Upper lobe of right lung (tissue), 1 donor: ENCODE measurements at regions of chr1 and their contacts with region 1.

Region 1: GRCh38 chr1:100606438-100606837 is 68.5 kb downstream of the GPR88 start:
- DNase-seq: no peak
- ATAC-seq: peak; percentile 81
- H3K4me3 ChIP-seq: no peak overlapping the region
- H3K27ac ChIP-seq: no peak overlapping the region
- H3K4me1 ChIP-seq: no peaks in the 10 kb centered on the region
- H3K27me3 ChIP-seq: no peaks in the 10 kb centered on the region
- CTCF ChIP-seq: peak; percentile 71

Region 2: DNA sequence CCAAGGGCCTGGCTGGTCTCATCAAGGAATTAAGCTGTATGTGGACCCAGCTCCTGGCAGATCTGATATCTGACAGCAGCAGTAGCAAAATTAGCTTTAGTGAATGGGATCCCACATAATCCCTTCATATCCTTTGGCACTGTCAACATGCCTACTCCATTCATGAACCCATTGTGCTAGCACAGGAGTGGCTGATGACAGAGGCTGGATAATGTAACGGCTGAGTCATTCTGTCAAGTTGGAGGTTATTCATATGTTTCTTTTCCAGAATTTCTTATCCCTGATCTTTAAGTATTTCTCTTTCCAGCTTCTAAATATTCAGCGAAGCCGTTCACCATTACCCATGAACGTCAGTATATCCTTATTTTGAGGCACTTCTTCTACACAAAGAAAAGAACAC is 203.9 kb after region 1 on chr1:
- intact Hi-C with region 1: no loop called
- DNase-seq: no peak
- ATAC-seq: no peak
- H3K4me3 ChIP-seq: no peak overlapping the region
- H3K27ac ChIP-seq: no peak overlapping the region
- H3K4me1 ChIP-seq: no peaks in the 10 kb centered on the region
- H3K27me3 ChIP-seq: no peaks in the 10 kb centered on the region
- CTCF ChIP-seq: no peak

Region 3: DNA sequence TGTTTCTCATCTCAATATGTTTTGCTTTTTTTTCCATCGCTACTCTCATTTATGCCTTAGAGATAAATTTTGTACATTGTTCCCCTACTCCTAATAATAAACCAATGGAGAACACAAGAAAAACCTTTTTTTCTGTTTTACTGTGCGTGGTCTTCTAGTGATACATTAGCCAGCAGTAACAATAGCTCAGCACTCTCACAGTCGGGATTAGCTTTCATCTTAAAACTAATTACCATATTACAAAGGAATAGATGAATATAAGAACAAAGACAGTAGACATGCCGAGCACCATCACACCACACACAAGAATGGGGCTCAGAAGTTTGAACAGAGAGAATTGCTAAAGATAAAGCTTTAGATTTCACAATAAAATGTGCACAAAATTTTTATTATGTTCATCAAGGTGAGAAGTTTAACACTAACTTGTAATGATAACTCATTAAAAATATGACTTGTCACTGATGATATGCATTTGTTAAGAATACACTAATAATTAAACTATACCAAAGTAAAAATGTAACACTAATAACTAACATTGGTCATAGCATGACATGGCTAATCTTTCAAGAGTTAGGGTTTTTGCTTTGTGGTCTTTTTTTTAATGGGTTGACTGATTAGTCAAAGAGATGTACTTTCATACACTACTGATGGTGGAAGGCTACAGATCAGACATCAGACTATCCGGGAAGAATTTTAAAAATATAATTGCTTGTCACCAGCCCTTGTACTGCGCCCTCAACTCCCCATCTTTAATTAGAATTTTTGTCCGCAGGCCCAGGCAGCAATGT is 226.4 kb after region 1 on chr1:
- intact Hi-C with region 1: no loop called
- DNase-seq: no peak
- ATAC-seq: no peak
- H3K4me3 ChIP-seq: no peak overlapping the region
- H3K27ac ChIP-seq: no peak overlapping the region
- H3K4me1 ChIP-seq: no peaks in the 10 kb centered on the region
- H3K27me3 ChIP-seq: no peaks in the 10 kb centered on the region
- CTCF ChIP-seq: no peak

Region 4: DNA sequence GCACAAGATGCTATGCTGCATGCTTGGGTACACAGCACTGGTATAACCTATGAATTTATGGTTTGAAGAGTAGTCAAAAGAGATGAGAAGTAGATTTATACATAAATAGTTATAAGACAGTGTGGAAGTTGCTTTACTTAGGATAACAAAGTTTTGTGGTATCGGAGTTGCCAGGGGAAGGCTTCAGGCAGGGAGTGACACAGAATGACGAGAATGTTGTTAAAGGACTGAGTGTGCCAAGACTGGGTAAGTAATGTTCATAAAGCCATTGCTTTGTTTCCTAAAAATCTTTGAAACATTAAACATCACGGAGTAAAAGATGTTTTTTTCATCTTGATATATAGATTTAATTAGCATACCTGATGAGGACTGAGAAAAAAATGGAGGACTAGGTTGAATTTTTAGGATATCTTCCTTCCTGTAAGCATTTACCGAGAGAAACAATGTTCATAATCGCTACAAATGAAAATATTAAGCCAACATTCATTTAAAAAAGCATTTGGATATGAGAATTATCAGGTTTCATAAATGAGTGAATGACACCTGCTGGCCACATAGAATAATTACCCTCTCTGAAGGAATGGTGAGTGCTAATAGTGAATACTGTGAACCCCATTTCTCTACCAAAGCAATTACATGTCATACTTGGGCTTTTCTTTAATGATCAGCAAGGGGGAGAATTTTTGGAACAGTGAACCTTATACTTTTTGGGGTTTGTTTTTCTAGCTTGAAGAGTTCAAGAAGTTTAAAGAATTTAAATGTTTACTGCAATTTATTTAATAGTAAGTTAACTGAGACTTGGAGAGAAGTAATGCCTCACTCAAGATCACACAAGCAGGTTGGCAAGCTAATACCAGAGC is 259.8 kb after region 1 on chr1:
- intact Hi-C with region 1: loop called (anchors 10 kb)
- DNase-seq: no peak
- ATAC-seq: peak; percentile 69
- H3K4me3 ChIP-seq: no peak overlapping the region
- H3K27ac ChIP-seq: no peak overlapping the region
- H3K4me1 ChIP-seq: no peaks in the 10 kb centered on the region
- H3K27me3 ChIP-seq: no peaks in the 10 kb centered on the region
- CTCF ChIP-seq: peak; percentile 69